ENCODE measurements at regions of chr5 and their contacts with region 1.

Region 1: DNA sequence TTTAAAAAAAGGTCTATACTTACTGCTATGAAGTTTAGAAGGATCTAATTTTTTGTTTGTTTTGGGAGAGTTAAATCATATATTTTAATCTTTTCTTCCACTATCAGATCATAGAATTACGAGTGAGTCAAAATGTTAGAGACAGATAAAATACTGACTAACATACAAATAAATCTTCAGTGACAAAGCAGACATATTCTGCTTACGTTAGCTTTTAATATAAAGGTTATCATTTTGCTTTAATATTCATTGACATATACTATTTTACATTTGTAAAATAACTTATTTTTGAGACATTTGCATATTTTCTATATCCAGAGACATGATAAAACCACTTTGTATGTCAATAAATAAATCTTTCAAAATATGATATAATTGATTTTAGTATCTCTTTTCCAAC is 64.6 kb upstream of the GABRA1 start:
- DNase-seq: no peak
- H3K4me3 ChIP-seq: no peak overlapping the region
- H3K27ac ChIP-seq: no peak overlapping the region
- H3K4me1 ChIP-seq: no peaks in the 10 kb centered on the region
- H3K27me3 ChIP-seq: no peaks in the 10 kb centered on the region
- CTCF ChIP-seq: no peak

Region 2: GRCh38 chr5:160679567-160680309 is 1103.6 kb before region 1 on chr5:
- intact Hi-C with region 1: loop called (anchors 5 kb)
- DNase-seq: no peak
- H3K4me3 ChIP-seq: no peak overlapping the region
- H3K27ac ChIP-seq: no peak overlapping the region
- H3K4me1 ChIP-seq: no peaks in the 10 kb centered on the region
- H3K27me3 ChIP-seq: peaks cover 0 to 7% of the 10 kb centered on the region in 2 donors
- CTCF ChIP-seq: no peak